ENCODE measurements at regions of chr11 and their contacts with region 1.

Region 1: DNA sequence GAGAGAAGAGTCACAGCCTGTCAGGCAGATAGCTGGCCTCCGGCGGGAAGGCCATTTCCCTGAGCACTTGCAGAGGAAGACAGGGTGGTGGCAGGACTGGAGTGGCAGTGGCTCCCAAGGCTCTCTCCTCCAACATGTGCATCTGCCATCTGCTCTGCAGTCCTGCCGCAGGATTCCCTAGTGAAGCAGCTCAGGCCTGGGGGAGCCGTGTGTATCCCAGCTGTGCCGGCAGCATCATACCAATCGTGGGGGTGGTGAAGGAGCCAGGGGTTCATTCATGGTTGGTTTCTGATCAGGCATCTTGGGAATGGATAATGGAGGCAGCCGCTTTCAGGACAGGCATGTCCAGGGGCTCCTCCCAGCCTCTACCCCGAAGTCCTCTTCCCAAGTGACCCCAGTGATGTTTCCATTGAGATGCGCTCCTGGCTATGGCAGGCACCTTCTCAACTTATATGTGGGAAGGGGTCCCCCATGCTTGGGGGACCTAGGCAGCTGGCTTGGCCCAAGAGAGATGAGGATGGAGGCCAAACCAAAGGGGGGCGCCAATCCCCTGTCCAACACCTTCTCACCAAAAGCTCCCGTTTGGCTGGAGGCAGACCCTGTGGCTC is 6.1 kb downstream of the TAGLN start:
- DNase-seq: no peak
- H3K4me3 ChIP-seq: no peak overlapping the region
- H3K27ac ChIP-seq: peak overlapping the region; percentile 78
- H3K4me1 ChIP-seq: peaks cover 35% of the 10 kb centered on the region
- H3K27me3 ChIP-seq: no peaks in the 10 kb centered on the region
- CTCF ChIP-seq: no peak

Region 2: GRCh38 chr11:117134431-117134830 is 70.9 kb before region 1 on chr11:
- intact Hi-C with region 1: loop called (anchors 5 kb)
- DNase-seq: no peak
- H3K4me3 ChIP-seq: no peak overlapping the region
- H3K27ac ChIP-seq: no peak overlapping the region
- H3K4me1 ChIP-seq: no peaks in the 10 kb centered on the region
- H3K27me3 ChIP-seq: no peaks in the 10 kb centered on the region
- CTCF ChIP-seq: no peak

Region 3: DNA sequence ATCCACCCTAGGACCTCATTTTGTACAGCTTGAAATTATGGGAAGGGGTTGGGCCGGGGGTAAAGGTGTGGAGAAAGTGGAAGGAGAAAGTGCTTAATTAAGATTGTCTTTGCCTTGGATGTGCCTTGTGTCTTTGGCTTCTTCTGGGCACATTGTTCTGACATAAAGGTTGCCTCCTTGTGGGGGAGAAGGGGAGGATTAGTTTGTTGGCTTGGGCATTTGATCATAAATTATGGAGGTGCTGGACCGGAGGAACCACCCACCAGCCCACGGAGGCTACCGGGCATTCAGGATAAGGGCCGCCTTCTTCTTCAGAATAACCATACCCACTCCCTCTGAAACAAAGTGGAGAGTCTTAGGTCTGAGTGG is 59.9 kb before region 1 on chr11:
- intact Hi-C with region 1: no loop called
- DNase-seq: no peak
- H3K4me3 ChIP-seq: peak overlapping the region; percentile 83
- H3K27ac ChIP-seq: peak overlapping the region; percentile 94
- H3K4me1 ChIP-seq: peaks cover 71% of the 10 kb centered on the region
- H3K27me3 ChIP-seq: no peaks in the 10 kb centered on the region
- CTCF ChIP-seq: peak; percentile 15

Region 4: GRCh38 chr11:118928108-118928870 is 1723.0 kb after region 1 on chr11:
- intact Hi-C with region 1: no loop called
- DNase-seq: peak; percentile 89
- H3K4me3 ChIP-seq: peak overlapping the region; percentile 90
- H3K27ac ChIP-seq: peak overlapping the region; percentile 100
- H3K4me1 ChIP-seq: peaks cover 74% of the 10 kb centered on the region
- H3K27me3 ChIP-seq: no peaks in the 10 kb centered on the region
- CTCF ChIP-seq: peak; percentile 97